Activated CD4-positive, alpha-beta T cell treated with anti-CD3 and anti-CD28 coated beads for 36 hours (primary cell): ENCODE measurements at regions of chr2 and their contacts with region 1.

Region 1: GRCh38 chr2:222311978-222312738 is 13.4 kb upstream of the PAX3 start:
- DNase-seq: no peak
- ATAC-seq: no peak
- H3K4me3 Mint-ChIP-seq: no peak overlapping the region
- H3K27ac Mint-ChIP-seq: no peak overlapping the region
- H3K4me1 Mint-ChIP-seq: peaks cover 5% of the 10 kb centered on the region
- H3K27me3 Mint-ChIP-seq: peaks cover 84% of the 10 kb centered on the region

Region 2: GRCh38 chr2:222298311-222299150 is 13.6 kb before region 1 on chr2 and contains the start of gene PAX3:
- CTCF ChIA-PET with region 1: no interaction called
- POLR2A ChIA-PET with region 1: no interaction called
- intact Hi-C with region 1: loop called (anchors 1 to 2 kb)
- DNase-seq: no peak
- ATAC-seq: no peak
- H3K4me3 Mint-ChIP-seq: no peak within 1 kb of the TSS
- H3K27ac Mint-ChIP-seq: no peak within 1 kb of the TSS
- H3K4me1 Mint-ChIP-seq: peaks cover 36% of the 10 kb centered on the region
- H3K27me3 Mint-ChIP-seq: peaks cover 87% of the 10 kb centered on the region
- total RNA-seq, gene PAX3: not detected

Region 3: DNA sequence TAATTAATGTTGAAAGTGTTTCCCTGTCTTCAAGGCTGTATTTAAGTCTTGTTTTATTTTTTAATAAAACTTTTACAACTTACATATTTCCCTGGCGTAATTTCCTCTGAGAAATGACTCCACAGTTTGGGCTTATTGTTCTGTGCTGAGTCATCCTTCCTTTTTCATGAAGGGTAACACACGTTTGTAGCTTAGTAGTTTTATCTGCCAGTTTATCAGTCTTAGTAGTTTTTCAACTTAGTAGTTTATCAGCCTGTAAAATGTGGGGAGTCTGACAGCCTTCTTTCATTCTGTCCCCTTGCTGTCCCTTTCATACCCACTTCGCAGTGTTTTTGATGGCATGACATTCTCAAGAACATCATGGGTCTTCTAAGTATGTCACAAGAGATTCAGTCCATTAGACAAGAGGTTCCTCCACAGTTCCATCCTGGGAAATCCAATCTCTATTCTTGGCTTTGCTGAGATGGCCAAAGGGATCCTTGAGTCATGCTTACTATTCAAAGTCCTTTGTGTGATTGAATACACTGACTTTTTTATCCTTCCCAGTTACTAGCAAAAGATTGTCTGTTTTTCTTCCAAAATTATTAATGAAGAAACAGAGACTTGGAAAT is 52.2 kb after region 1 on chr2:
- CTCF ChIA-PET with region 1: no interaction called
- POLR2A ChIA-PET with region 1: no interaction called
- intact Hi-C with region 1: no loop called
- DNase-seq: no peak
- ATAC-seq: no peak
- H3K4me3 Mint-ChIP-seq: no peak overlapping the region
- H3K27ac Mint-ChIP-seq: no peak overlapping the region
- H3K4me1 Mint-ChIP-seq: peaks cover 2% of the 10 kb centered on the region
- H3K27me3 Mint-ChIP-seq: peaks cover 4% of the 10 kb centered on the region

Region 4: DNA sequence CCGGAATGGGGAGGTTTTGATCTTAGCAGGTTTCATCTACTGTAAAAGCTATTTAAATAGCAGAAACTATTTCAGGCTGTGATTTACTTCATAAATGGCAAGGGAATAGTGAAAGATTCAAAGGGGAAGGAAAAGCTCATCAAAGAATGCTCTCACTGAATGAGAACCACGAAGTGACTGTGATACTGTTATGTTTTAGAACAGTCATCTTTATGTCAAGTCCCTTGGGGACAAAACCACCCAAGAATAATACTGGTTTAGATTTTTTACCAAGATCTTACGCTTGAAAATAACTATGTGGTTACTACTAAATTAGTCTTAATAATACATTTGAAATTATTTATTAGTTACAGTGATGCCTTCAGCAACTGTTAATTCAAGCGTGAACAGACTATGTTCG is 315.6 kb after region 1 on chr2:
- CTCF ChIA-PET with region 1: no interaction called
- POLR2A ChIA-PET with region 1: no interaction called
- intact Hi-C with region 1: no loop called
- DNase-seq: no peak
- ATAC-seq: no peak
- H3K4me3 Mint-ChIP-seq: no peak overlapping the region
- H3K27ac Mint-ChIP-seq: no peak overlapping the region
- H3K4me1 Mint-ChIP-seq: no peaks in the 10 kb centered on the region
- H3K27me3 Mint-ChIP-seq: no peaks in the 10 kb centered on the region

Region 5: GRCh38 chr2:223306371-223306770 is 994.2 kb after region 1 on chr2:
- CTCF ChIA-PET with region 1: no interaction called
- POLR2A ChIA-PET with region 1: no interaction called
- intact Hi-C with region 1: no loop called
- DNase-seq: peak; percentile 11
- ATAC-seq: no peak
- H3K4me3 Mint-ChIP-seq: no peak overlapping the region
- H3K27ac Mint-ChIP-seq: no peak overlapping the region
- H3K4me1 Mint-ChIP-seq: no peaks in the 10 kb centered on the region
- H3K27me3 Mint-ChIP-seq: no peaks in the 10 kb centered on the region